GM10248 (cell line): ENCODE measurements at regions of chr5 and their contacts with region 1.

Region 1: GRCh38 chr5:170225326-170226128 is 7.3 kb upstream of the C5orf58 start:
- DNase-seq: peak; percentile 71
- CTCF ChIP-seq: peak; percentile 72

Region 2: GRCh38 chr5:170235876-170236864 is 10.6 kb after region 1 on chr5:
- CTCF ChIA-PET with region 1: interaction called, 43 read pairs
- POLR2A ChIA-PET with region 1: no interaction called
- DNase-seq: no peak
- CTCF ChIP-seq: no peak

Region 3: DNA sequence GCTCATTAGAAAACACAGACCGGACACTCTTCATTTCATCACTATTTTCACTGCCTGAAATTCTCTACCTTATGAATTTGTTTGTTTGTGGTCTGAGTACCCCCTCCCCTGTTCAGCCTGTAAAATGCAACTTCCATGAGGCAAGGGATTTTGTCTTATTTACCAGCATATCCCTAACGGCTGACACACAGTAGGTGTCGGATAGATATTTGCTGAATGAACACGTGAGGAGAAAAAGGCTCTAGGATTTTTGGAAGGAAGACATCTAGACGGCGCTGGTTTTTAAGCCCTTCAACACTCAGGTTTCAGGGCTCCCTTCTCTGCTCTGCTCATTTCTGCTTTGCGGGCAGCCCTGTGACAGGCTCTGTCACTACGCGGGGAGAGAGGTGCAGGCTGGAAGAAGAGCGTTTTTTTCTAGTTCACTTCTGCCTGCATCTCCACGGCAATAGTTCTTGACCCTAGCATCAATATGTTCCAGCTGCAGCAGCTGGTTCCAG is 122.7 kb after region 1 on chr5:
- CTCF ChIA-PET with region 1: interaction called, 14 read pairs
- POLR2A ChIA-PET with region 1: no interaction called
- DNase-seq: no peak
- CTCF ChIP-seq: no peak

Region 4: GRCh38 chr5:170411100-170411499 is 185.6 kb after region 1 on chr5:
- CTCF ChIA-PET with region 1: interaction called, 12 read pairs
- POLR2A ChIA-PET with region 1: no interaction called
- DNase-seq: peak; percentile 40
- CTCF ChIP-seq: peak; percentile 38

Region 5: DNA sequence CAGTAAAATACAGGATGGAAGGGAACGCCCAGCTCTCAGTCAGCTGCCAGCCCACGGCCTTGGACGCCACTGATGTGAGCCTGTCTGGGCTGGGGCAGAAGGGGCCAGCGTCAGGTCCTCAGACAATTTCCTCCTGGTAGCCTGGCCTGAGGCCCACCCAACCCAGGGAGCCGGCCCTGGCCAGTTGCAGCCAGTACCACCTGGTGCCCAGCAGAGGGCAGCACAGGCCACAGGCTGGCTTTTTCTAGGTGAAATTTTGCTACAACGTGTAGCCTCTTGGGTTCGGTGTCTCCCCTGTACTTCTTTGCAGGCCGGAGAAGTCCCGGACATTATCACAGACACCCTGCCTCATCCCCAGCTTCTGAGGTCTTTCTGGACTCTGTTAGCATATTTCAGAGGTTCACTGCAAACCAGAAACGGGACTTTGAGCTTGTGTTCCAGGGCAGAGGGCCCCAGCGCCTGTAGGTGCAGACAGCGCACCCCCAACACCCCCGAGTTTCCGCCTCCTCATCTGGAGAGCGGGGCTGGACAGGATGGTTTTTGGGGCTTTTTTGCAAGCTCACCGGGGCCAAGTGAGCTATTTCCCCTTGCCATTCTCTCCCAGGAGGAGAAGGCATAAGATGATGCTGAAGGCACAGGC is 209.6 kb after region 1 on chr5:
- CTCF ChIA-PET with region 1: interaction called, 17 read pairs
- POLR2A ChIA-PET with region 1: no interaction called
- DNase-seq: peak; percentile 77
- CTCF ChIP-seq: peak; percentile 94